Colonic mucosa (tissue), 4 donors: ENCODE measurements at regions of chr19 and their contacts with region 1.

Region 1: DNA sequence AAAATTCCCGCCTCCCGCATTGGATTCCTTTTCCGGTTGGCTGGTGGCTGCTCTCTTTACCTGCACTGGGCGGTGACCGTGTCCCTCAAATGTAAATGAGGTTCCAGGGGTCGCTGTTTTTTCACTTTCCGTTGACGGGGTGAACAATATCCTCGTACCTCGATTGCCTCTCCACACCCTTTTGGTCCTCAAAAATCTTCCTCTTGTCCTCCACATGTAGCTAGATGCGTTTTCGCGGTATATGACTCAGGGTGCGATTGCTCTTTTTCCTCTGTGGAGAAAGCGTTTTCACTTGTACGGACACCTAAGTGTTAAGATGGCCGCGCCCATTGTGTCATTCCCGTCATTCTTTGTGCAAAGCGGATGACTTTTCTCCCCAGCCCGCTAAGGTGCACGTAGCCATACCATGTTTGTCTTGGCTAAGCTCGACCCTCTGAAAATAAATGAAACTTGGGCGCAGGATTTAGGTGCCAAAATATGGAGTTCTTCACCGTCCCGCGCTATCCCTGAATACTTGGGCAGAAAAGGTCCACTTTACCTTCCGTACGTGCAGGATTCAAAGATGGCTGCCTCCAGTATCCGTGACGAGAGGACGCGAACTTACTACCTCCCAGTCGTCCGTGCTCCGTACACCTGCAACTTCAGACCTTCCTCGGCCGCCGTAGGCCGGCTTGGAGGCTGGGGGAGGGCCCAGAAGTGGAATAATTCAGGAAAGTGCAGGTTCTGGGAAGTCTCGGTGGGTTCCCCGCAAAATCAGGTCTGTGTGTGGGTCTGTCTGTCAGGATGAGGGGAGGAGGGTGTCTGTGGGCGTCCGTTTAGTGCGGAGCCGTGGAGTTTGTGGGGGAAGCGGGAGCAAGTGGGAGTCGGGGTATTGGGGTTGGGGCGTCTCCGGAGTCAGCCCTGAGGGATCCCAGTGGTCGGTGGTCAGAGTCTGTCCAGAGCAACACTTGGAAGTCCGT is at the start of gene ZNF613:
- DNase-seq: peak; percentile 94
- H3K4me3 ChIP-seq: peak within 1 kb of the TSS; percentile 80
- H3K27ac ChIP-seq: peak within 1 kb of the TSS; percentile 73
- H3K4me1 ChIP-seq: peaks cover 6% of the 10 kb centered on the region
- H3K27me3 ChIP-seq: no peaks in the 10 kb centered on the region
- CTCF ChIP-seq: peak; percentile 11
- total RNA-seq, gene ZNF613: 4.2 to 4.4 TPM

Region 2: GRCh38 chr19:51887522-51888498 is 39.3 kb before region 1 on chr19 and contains the start of gene ZNF577:
- intact Hi-C with region 1: loop called (anchors 5 kb)
- DNase-seq: peak; percentile 98
- H3K4me3 ChIP-seq: peak within 1 kb of the TSS; percentile 53
- H3K27ac ChIP-seq: peak within 1 kb of the TSS; percentile 13
- H3K4me1 ChIP-seq: no peaks in the 10 kb centered on the region
- H3K27me3 ChIP-seq: no peaks in the 10 kb centered on the region
- CTCF ChIP-seq: no peak
- total RNA-seq, gene ZNF577: 5.5 to 7.4 TPM

Region 3: DNA sequence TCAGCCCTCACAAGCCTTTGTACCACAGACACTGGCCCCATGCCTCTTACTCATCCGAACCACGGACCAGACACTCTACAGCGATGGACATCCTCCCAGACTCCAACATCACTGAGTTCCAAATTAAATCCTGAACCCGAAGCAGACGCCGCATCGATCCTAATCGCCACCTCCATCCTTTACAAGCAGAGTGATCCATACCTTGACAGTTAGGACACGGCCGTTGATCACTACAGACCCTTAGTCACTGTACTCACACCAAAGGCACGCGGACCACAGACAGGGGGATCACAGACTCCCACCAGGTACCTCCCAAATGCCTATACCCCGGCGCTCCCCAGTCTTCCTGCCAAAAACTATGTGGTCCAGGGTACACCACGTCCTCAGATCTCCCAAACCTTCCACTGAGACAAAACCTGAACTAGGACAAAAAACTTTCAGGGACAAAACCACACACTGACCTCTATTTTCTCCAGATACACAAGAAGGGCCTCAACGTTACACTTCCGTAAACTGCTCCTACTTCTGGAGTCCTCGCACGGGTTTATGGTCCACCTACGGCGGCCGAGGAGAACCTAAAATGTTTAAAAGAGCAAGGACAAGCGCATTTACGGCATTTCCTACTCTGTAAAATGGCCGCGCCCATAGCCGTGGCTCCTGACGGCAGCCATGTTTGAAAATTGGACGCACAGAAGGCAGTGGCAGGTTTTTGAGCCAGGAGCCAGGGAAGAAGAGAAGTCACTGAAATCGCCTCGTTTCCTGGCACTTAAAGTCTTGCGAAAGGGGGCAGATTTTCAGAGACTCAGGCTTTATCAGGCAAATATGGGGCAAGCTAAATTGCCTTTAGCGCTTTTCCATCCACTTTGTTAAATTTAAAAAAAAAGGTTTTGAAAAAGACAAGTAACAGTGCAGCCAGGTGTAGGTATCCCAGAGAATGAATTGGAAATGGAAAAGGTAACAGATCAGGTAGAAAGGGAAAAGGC is 59.5 kb after region 1 on chr19 and contains the start of gene ZNF350:
- intact Hi-C with region 1: loop called (anchors 10 kb)
- DNase-seq: peak; percentile 99
- H3K4me3 ChIP-seq: peak within 1 kb of the TSS; percentile 69
- H3K27ac ChIP-seq: no peak within 1 kb of the TSS
- H3K4me1 ChIP-seq: no peaks in the 10 kb centered on the region
- H3K27me3 ChIP-seq: no peaks in the 10 kb centered on the region
- CTCF ChIP-seq: no peak
- total RNA-seq, gene ZNF350: 10.5 to 11.1 TPM

Region 4: GRCh38 chr19:52007806-52008557 is 80.9 kb after region 1 on chr19 and contains the start of gene ZNF615:
- intact Hi-C with region 1: loop called (anchors 5 kb)
- DNase-seq: peak; percentile 94
- H3K4me3 ChIP-seq: peak within 1 kb of the TSS; percentile 82
- H3K27ac ChIP-seq: peak within 1 kb of the TSS; percentile 57
- H3K4me1 ChIP-seq: no peaks in the 10 kb centered on the region
- H3K27me3 ChIP-seq: no peaks in the 10 kb centered on the region
- CTCF ChIP-seq: no peak
- total RNA-seq, gene ZNF615: 4.6 to 4.7 TPM